Ascending aorta (tissue), 2 donors: ENCODE measurements at regions of chr6 and their contacts with region 1.

Region 1: DNA sequence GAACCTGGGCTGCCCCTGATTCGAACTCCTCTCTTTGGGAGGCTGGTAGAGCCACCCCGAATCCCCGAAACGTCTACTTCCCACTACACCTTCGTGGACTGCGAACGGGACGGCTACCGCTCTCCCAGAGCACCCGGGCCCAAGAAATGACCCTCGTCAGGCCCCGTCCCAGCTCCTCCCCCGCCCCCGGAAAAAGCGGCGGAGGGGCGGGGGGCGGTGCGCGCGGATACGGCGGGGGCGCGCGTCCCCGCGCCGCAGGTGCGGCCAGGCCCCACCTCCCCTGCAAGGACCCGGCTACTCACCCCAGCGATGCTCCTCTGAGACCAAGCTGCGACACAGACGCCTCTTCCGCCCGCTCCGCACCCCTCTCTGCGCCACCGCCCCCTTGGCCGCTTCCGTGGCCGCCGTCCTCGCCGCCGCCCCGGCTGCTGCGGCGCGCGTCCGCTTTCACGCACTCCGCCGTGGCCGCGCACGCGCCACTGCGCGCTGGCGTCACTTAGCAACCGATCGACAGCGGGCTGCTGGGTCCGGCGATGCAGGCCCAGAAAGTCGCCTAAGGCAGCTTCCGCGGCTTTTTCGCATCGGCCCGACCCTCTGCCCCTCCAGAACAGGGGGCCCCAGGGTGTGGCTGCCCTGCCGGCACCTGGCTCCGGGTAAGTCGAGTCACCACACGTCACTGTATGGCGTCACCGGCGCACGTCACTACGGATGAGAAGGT is at the start of gene BTBD9:
- DNase-seq: peak; percentile 29 to 90
- H3K4me3 ChIP-seq: peak within 1 kb of the TSS; percentile 83 to 84
- H3K27ac ChIP-seq: peak within 1 kb of the TSS; percentile 90 to 93
- H3K4me1 ChIP-seq: peaks cover 10 to 11% of the 10 kb centered on the region in 2 donors
- H3K27me3 ChIP-seq: no peaks in the 10 kb centered on the region
- CTCF ChIP-seq: no peak
- total RNA-seq, gene BTBD9: 9.9 TPM

Region 2: GRCh38 chr6:38528196-38528965 is 111.3 kb before region 1 on chr6:
- intact Hi-C with region 1: no loop called
- DNase-seq: no peak
- H3K4me3 ChIP-seq: no peak overlapping the region
- H3K27ac ChIP-seq: no peak overlapping the region
- H3K4me1 ChIP-seq: no peaks in the 10 kb centered on the region
- H3K27me3 ChIP-seq: no peaks in the 10 kb centered on the region
- CTCF ChIP-seq: no peak

Region 3: DNA sequence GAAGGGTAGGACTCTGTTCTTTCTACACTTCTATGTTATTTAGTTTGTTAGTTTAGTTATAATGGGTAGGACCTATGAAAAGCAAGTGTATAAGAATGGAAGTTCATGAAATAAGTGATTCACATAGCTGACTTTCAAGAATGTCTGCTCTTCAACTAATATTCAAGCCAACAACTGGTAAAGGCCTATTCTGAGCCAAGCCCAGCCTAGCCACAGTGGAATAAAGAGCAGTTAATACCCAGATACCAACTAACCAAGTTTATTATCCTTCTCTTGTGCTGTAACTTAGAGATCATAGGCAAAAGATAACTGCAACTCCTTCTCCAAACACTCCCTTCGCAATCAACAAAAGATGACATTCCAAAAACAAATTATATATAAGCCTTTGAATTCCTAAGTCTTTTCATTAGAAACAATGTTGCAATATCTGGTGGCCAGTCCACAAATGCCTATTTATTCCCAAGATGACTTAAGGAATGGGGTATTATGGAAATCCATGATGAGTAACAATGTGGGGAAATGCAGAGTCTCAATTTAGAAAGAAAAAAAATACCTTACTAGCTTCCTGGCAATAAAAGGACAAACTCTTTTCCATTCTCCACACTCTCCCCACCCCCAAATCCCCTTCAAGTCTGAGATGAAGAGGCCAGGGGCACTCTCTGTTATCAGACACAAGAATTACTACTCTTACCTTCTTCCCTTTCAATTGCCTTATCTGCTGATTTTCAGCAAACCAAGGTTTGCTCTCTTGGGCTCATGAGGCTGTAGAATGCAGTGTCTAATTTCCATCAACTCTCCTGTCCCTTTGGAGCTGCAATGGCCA is 27.3 kb before region 1 on chr6:
- intact Hi-C with region 1: loop called (anchors 1 kb)
- DNase-seq: no peak
- H3K4me3 ChIP-seq: no peak overlapping the region
- H3K27ac ChIP-seq: peak overlapping the region in 1 of 2 donors; percentile 16
- H3K4me1 ChIP-seq: peaks cover 0 to 13% of the 10 kb centered on the region in 2 donors
- H3K27me3 ChIP-seq: no peaks in the 10 kb centered on the region
- CTCF ChIP-seq: no peak

Region 4: DNA sequence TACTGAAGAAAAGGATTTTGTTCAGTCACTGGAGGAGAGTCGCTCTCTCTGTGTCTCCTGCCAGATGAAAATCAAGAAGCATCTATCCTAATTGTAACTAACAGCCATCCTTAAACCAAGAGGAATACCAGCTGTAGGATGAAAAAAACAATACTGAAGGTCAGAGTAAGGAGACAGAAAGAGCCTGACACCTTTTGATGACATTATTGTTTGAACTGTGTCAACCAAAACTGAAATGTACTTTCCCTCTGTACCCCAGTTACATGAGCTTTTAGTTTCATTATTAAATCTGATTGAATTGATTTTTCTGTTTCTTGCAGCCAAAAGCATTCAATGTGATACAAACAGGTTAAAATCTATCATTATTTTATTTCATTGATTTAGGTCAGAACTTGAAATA is 17.2 kb after region 1 on chr6:
- intact Hi-C with region 1: no loop called
- DNase-seq: no peak
- H3K4me3 ChIP-seq: no peak overlapping the region
- H3K27ac ChIP-seq: no peak overlapping the region
- H3K4me1 ChIP-seq: no peaks in the 10 kb centered on the region
- H3K27me3 ChIP-seq: no peaks in the 10 kb centered on the region
- CTCF ChIP-seq: no peak

Region 5: DNA sequence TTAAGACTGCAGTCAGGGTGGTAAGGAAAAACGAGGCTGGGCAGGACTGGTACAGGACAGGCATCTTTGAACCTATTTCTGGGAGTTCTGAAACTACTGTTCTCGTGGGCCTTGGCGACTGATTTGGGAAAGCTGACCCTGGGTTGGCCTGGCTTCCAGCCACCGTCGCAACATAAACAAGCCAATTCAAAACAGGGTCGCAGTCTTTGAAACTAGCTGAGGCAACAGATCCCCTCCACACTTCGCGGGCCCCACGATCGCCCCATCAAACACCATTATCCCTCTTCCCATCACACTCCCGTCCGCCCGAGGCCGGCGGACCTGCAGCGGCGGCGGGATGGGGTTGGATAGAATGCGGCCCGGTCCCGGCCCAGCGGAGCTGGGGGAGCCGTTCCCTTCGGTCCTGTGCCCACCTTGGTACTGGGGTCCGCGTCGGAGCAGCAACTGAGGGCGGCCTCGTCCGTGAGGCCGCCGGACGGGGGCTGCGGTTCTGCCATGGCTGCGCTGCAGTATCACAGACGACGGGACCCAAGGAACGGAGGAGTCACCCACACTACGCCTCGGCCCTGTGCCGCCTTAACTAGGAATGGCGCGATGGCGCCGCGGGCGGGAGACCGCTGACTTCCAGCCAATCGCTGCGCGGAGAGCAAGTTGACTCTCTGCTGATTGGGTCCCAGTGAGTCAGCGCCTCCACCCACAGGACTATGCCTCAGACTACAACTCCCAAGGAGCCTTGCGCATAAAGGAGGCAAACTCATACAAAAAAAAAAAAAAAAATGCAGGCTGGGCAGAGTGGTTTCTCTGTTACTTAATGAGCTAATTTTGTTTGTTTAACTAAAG is 63.1 kb after region 1 on chr6 and contains the start of gene GLO1:
- intact Hi-C with region 1: loop called (anchors 1 kb)
- DNase-seq: peak; percentile 94 to 99
- H3K4me3 ChIP-seq: peak within 1 kb of the TSS; percentile 80 to 88
- H3K27ac ChIP-seq: peak within 1 kb of the TSS; percentile 90 to 91
- H3K4me1 ChIP-seq: no peaks in the 10 kb centered on the region
- H3K27me3 ChIP-seq: no peaks in the 10 kb centered on the region
- CTCF ChIP-seq: no peak
- total RNA-seq, gene GLO1: 32.6 TPM

Region 6: GRCh38 chr6:38836585-38836984 is 196.9 kb after region 1 on chr6:
- intact Hi-C with region 1: no loop called
- DNase-seq: no peak
- H3K4me3 ChIP-seq: no peak overlapping the region
- H3K27ac ChIP-seq: no peak overlapping the region
- H3K4me1 ChIP-seq: no peaks in the 10 kb centered on the region
- H3K27me3 ChIP-seq: no peaks in the 10 kb centered on the region
- CTCF ChIP-seq: no peak